ENCODE measurements at regions of chr2 and their contacts with region 1.

Region 1: GRCh38 chr2:182980115-182980514 is 58.1 kb downstream of the NCKAP1 start:
- DNase-seq: no peak
- ATAC-seq: peak; percentile 42
- H3K4me3 Mint-ChIP-seq: no peak overlapping the region
- H3K27ac Mint-ChIP-seq: no peak overlapping the region
- H3K4me1 Mint-ChIP-seq: no peaks in the 10 kb centered on the region
- H3K27me3 Mint-ChIP-seq: no peaks in the 10 kb centered on the region

Region 2: DNA sequence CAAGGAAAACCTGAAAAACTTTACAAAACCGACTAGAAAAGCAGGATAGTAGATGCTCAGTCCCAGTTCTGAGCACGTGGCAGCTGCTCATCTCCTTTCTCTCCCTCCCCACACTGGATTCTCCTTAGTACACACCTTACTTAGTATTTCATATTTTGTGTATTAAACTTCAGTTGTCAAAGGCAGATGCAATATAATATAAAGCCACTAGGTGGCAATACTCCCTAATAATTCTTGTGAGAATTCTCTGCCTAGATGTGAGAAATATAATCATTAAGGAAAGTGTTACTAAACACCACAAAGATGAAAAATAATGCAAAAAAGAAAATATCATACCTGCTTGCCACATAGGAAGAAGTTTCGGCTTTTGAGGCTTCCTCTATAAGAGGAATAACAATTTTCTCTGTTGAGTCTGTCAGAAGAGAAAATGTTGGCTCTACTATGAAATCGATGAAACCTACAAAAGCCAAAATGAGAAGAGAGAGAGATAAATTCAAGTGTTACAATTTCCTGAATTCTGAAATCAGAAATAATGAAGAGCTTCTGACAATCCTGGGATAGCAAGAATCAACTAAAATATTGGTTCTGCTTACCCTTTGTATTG is 793.9 kb before region 1 on chr2:
- CTCF ChIA-PET with region 1: interaction called, 31 read pairs
- POLR2A ChIA-PET with region 1: no interaction called
- intact Hi-C with region 1: loop called (anchors 1 kb)
- DNase-seq: no peak
- ATAC-seq: no peak
- H3K4me3 Mint-ChIP-seq: no peak overlapping the region
- H3K27ac Mint-ChIP-seq: no peak overlapping the region
- H3K4me1 Mint-ChIP-seq: no peaks in the 10 kb centered on the region
- H3K27me3 Mint-ChIP-seq: peaks cover 3% of the 10 kb centered on the region

Region 3: DNA sequence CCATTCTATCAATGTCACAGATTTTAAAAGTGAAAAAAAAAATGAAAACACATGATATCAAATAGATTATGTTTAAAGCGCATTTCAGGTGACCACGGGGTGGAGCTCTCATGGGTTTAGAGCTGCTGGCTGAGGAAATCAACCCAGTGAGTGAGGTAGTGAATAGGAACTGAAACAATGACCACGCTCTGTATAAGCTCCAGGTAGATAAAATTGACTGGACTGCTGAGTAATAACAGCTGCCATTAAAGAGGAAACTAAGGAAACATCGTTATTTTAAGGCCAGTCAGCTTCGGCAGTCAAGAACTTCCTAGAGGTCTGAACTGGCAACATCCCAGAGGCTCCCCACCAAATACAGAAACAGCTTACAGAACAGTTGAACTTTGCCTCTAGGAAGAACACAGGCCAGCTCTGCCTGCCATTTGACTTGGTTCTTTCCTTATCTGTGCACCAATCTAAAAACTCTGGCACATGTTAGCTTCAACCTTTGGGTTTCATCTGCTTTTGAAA is 739.2 kb before region 1 on chr2:
- CTCF ChIA-PET with region 1: interaction called, 4 read pairs
- POLR2A ChIA-PET with region 1: no interaction called
- intact Hi-C with region 1: loop called in 1 of 2 experiments (anchors 5 kb)
- DNase-seq: peak; percentile 49
- ATAC-seq: peak; percentile 64
- H3K4me3 Mint-ChIP-seq: no peak overlapping the region
- H3K27ac Mint-ChIP-seq: no peak overlapping the region
- H3K4me1 Mint-ChIP-seq: peaks cover 2% of the 10 kb centered on the region
- H3K27me3 Mint-ChIP-seq: peaks cover 3% of the 10 kb centered on the region

Region 4: DNA sequence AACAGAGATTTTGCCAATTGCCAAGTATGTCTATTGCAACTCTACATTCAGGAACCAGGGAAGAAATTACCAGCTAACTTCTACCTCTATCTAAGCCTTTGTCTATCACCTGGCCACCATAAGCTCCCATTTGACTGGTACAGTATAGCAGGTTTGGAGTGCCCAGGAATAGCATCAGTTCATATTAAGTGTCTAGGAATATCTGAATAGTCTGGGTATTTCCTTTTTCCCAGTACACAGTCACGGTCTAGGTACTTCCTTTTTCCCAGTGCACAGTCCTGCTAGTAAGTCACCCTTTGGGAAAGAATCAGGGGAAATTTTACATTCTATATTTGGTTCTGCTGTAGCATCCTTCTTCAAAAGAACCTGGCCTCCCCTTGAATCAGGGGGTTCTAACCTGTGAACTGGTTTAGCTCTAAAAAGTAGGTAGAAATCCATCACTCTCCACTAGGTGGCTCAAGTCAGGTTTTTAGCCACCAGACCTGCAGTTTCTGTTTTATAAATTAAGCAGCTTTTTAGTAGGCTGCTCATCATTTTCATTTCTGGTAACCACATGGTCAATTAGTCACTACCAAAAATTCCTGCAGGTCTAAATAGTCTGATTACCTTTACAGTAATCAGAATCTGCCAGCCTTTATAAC is 313.3 kb before region 1 on chr2:
- CTCF ChIA-PET with region 1: interaction called, 25 read pairs
- POLR2A ChIA-PET with region 1: no interaction called
- intact Hi-C with region 1: loop called (anchors 1 kb)
- DNase-seq: peak; percentile 20
- ATAC-seq: peak; percentile 86
- H3K4me3 Mint-ChIP-seq: no peak overlapping the region
- H3K27ac Mint-ChIP-seq: no peak overlapping the region
- H3K4me1 Mint-ChIP-seq: peaks cover 4% of the 10 kb centered on the region
- H3K27me3 Mint-ChIP-seq: peaks cover 3% of the 10 kb centered on the region

Region 5: GRCh38 chr2:182763311-182763912 is 216.7 kb before region 1 on chr2:
- CTCF ChIA-PET with region 1: interaction called, 13 read pairs
- POLR2A ChIA-PET with region 1: no interaction called
- intact Hi-C with region 1: loop called (anchors 2 kb)
- DNase-seq: no peak
- ATAC-seq: no peak
- H3K4me3 Mint-ChIP-seq: no peak overlapping the region
- H3K27ac Mint-ChIP-seq: no peak overlapping the region
- H3K4me1 Mint-ChIP-seq: no peaks in the 10 kb centered on the region
- H3K27me3 Mint-ChIP-seq: no peaks in the 10 kb centered on the region

Region 6: DNA sequence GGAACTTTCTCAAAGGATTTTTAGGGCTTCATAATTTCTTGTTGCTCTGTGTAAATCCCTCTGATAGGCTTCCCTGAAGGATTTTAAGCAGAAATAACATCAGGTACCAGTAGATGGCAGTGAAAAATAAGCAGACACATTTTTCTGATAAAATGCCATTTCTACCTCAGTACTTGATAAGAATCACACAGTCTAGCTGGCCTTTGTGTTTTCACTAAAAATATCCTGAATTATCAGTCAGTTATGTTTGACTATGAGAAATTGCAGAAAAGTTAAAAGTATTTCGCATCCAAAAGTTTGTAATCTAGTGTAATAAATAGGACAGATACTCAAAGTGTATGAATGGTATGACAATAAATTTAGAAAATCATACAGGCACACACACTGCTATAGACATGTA is 195.3 kb before region 1 on chr2:
- CTCF ChIA-PET with region 1: interaction called, 12 read pairs
- POLR2A ChIA-PET with region 1: no interaction called
- intact Hi-C with region 1: loop called (anchors 1 to 5 kb)
- DNase-seq: no peak
- ATAC-seq: no peak
- H3K4me3 Mint-ChIP-seq: no peak overlapping the region
- H3K27ac Mint-ChIP-seq: no peak overlapping the region
- H3K4me1 Mint-ChIP-seq: no peaks in the 10 kb centered on the region
- H3K27me3 Mint-ChIP-seq: no peaks in the 10 kb centered on the region

Region 7: DNA sequence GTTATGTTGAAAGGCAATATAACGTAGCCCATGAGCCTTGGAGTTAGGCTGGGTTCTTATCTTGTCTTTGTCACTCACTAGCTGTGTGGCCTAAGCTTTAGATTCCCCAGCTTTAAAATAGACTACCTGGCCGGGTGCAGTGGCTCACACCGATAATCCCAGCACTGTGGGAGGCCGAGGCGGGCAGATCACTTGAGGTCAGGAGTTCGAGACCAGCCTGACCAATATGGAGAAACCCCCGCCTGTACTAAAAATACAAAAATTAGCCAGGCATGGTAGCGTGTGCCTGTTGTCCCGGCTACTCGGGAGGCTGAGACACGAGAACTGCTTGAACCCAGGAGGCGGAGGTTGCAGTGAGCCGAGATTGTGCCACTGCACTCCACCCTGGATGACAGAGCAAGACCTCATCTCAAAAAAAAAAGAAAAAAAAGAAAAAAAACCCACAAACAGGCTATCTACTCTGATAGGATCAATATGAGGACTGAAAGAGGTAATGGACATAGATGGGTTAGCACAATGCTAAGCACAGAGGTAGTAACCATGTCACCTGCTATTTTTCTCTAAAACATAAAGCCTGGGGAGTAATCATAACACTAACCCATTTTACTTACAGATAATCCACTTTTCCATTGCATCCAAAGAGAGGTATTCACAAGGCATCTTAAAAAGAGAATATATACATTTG is 14.3 kb after region 1 on chr2:
- CTCF ChIA-PET with region 1: interaction called, 20 read pairs
- POLR2A ChIA-PET with region 1: no interaction called
- intact Hi-C with region 1: no loop called
- DNase-seq: no peak
- ATAC-seq: no peak
- H3K4me3 Mint-ChIP-seq: no peak overlapping the region
- H3K27ac Mint-ChIP-seq: no peak overlapping the region
- H3K4me1 Mint-ChIP-seq: no peaks in the 10 kb centered on the region
- H3K27me3 Mint-ChIP-seq: no peaks in the 10 kb centered on the region